T-cell (primary cell): ENCODE measurements at regions of chr1 and their contacts with region 1.

Region 1: GRCh38 chr1:202750758-202751157 is 40.5 kb upstream of the SYT2 start:
- DNase-seq: peak in 1 of 35 experiments; percentile 26
- ATAC-seq: no peak
- H3K4me3 ChIP-seq: no peak overlapping the region
- H3K4me3 Mint-ChIP-seq: no peak overlapping the region
- H3K27ac ChIP-seq: no peak overlapping the region
- H3K27ac Mint-ChIP-seq: no peak overlapping the region
- H3K4me1 ChIP-seq: no peaks in the 10 kb centered on the region
- H3K4me1 Mint-ChIP-seq: no peaks in the 10 kb centered on the region
- H3K27me3 ChIP-seq: no peaks in the 10 kb centered on the region
- H3K27me3 Mint-ChIP-seq: no peaks in the 10 kb centered on the region

Region 2: GRCh38 chr1:202765721-202766120 is 15.0 kb after region 1 on chr1:
- CTCF ChIA-PET with region 1: no interaction called
- POLR2A ChIA-PET with region 1: interaction called, 3 to 10 read pairs
- DNase-seq: no peak
- ATAC-seq: no peak
- H3K4me3 ChIP-seq: no peak overlapping the region
- H3K4me3 Mint-ChIP-seq: no peak overlapping the region
- H3K27ac ChIP-seq: no peak overlapping the region
- H3K27ac Mint-ChIP-seq: no peak overlapping the region
- H3K4me1 ChIP-seq: no peaks in the 10 kb centered on the region
- H3K4me1 Mint-ChIP-seq: no peaks in the 10 kb centered on the region
- H3K27me3 ChIP-seq: no peaks in the 10 kb centered on the region
- H3K27me3 Mint-ChIP-seq: no peaks in the 10 kb centered on the region

Region 3: DNA sequence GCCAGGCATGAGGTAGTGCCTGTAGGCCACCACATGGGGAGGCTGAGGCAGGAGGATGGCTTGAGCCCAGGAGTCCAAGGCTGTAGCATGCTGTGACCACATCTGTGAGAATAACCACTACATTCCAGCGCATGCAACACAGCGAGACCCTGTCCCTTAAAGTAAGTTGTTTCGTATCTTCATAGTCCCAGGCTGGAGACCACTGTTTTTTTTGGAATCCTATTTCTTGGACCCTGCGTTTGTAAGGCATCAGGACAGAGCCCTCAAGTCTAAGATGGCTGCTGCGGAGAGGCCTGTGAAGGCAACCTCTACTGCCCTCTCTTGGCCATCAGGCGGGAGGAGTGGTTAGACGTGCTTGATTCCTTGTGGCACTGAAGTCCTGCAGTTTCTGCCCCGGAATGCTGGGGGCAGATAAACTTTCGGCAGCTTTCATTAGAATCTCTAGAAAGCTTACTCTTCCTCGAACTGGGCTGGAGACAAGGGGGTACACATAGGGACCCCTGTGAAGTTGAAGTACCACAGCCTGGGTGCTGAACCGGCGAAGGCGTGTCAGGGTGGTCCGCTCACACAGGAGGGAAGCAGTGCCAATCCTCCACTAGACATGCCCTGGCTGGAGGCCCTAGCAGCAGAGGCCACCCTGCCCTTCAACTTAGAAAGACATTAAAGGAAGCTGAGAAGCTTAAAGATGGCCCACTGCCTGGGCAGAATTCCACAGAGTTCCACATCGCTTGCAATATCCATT is 101.6 kb after region 1 on chr1:
- CTCF ChIA-PET with region 1: no interaction called
- POLR2A ChIA-PET with region 1: interaction called in 1 of 2 experiments, 12 read pairs
- DNase-seq: peak in 11 of 35 experiments; percentile 5 to 53 (median 14)
- ATAC-seq: peak in 3 of 4 experiments; percentile 43 to 68 (median 58)
- H3K4me3 ChIP-seq: no peak overlapping the region
- H3K4me3 Mint-ChIP-seq: no peak overlapping the region
- H3K27ac ChIP-seq: no peak overlapping the region
- H3K27ac Mint-ChIP-seq: no peak overlapping the region
- H3K4me1 ChIP-seq: no peaks in the 10 kb centered on the region
- H3K4me1 Mint-ChIP-seq: no peaks in the 10 kb centered on the region
- H3K27me3 ChIP-seq: peaks cover 0 to 2% of the 10 kb centered on the region in 2 experiments
- H3K27me3 Mint-ChIP-seq: no peaks in the 10 kb centered on the region

Region 4: GRCh38 chr1:202952818-202953217 is 202.1 kb after region 1 on chr1:
- CTCF ChIA-PET with region 1: no interaction called
- POLR2A ChIA-PET with region 1: no interaction called
- DNase-seq: peak in 1 of 35 experiments; percentile 18
- ATAC-seq: peak; percentile 40 to 88 (median 76)
- H3K4me3 ChIP-seq: no peak overlapping the region
- H3K4me3 Mint-ChIP-seq: peak overlapping the region in 1 of 3 donors; percentile 11
- H3K27ac ChIP-seq: no peak overlapping the region
- H3K27ac Mint-ChIP-seq: peak overlapping the region; percentile 79 to 85
- H3K4me1 ChIP-seq: peaks cover 23 to 26% of the 10 kb centered on the region in 2 experiments
- H3K4me1 Mint-ChIP-seq: peaks cover 51 to 61% (median 60%) of the 10 kb centered on the region in 3 donors
- H3K27me3 ChIP-seq: no peaks in the 10 kb centered on the region
- H3K27me3 Mint-ChIP-seq: no peaks in the 10 kb centered on the region

Region 5: DNA sequence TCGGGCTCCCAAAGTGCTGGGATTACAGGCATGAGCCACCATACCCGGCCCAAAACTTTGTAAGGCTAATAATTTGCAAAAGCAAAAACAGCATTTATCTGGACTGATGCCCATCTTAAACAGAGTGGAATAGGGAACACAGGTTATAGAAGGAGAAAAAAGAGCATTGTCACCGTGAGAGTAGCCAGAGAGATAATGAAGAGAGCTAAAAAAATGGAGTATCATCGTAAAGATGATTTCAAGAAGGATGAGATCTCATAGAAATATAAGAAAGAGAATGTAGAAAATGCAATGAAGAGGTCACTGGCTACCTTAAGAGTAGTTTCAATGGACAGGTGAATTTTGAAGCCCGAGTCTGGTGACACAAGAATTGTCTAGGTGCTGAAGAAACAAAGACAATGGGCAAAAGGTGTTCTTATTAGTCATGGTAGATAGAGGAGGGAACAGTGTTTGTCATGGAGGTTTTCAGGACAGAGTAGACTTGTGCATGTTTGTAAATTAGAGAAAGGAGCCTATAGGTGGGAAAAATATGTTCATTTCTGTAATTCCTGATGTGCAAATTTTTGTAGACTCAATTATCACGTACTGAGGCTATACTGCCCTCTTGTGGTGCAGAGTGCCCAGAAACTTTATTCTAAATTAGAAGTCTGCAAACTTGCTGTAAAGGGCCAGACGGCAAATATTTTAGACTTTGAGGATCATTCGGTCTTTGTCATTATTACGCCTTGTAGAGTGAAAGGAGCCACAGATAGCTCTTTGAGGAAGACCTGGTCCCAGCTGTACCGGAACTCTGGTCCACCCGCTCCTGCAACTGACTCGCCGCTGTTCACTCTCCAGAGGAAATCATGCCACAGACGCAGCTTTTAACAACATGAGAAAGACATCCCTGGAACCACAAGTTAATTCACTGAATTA is 248.3 kb after region 1 on chr1:
- CTCF ChIA-PET with region 1: interaction called, 5 to 12 read pairs
- POLR2A ChIA-PET with region 1: no interaction called
- DNase-seq: peak in 34 of 35 experiments; percentile 11 to 83 (median 46)
- ATAC-seq: peak in 3 of 4 experiments; percentile 56 to 67 (median 56)
- H3K4me3 ChIP-seq: no peak overlapping the region
- H3K4me3 Mint-ChIP-seq: peak overlapping the region in 1 of 3 donors; percentile 30
- H3K27ac ChIP-seq: no peak overlapping the region
- H3K27ac Mint-ChIP-seq: peak overlapping the region in 1 of 2 donors; percentile 37
- H3K4me1 ChIP-seq: peaks cover 0 to 3% of the 10 kb centered on the region in 2 experiments
- H3K4me1 Mint-ChIP-seq: peaks cover 4 to 10% (median 9%) of the 10 kb centered on the region in 3 donors
- H3K27me3 ChIP-seq: peaks cover 0 to 4% of the 10 kb centered on the region in 2 experiments
- H3K27me3 Mint-ChIP-seq: peaks cover 27 to 37% of the 10 kb centered on the region in 2 donors